MCF 10A (cell line): ENCODE measurements at regions of chr11 and their contacts with region 1.

Region 1: GRCh38 chr11:36478700-36479329 is 31.3 kb downstream of the TRAF6 start:
- DNase-seq: peak; percentile 59
- H3K4me3 Mint-ChIP-seq: no peak overlapping the region
- H3K27ac Mint-ChIP-seq: no peak overlapping the region
- H3K4me1 Mint-ChIP-seq: no peaks in the 10 kb centered on the region
- H3K27me3 Mint-ChIP-seq: no peaks in the 10 kb centered on the region
- CTCF ChIP-seq: peak; percentile 72

Region 2: GRCh38 chr11:36265793-36266628 is 212.8 kb before region 1 on chr11:
- CTCF ChIA-PET with region 1: interaction called, 16 read pairs
- POLR2A ChIA-PET with region 1: no interaction called
- intact Hi-C with region 1: no loop called
- DNase-seq: peak; percentile 68
- H3K4me3 Mint-ChIP-seq: no peak overlapping the region
- H3K27ac Mint-ChIP-seq: no peak overlapping the region
- H3K4me1 Mint-ChIP-seq: no peaks in the 10 kb centered on the region
- H3K27me3 Mint-ChIP-seq: no peaks in the 10 kb centered on the region
- CTCF ChIP-seq: peak; percentile 92

Region 3: GRCh38 chr11:36306888-36307287 is 171.9 kb before region 1 on chr11:
- CTCF ChIA-PET with region 1: interaction called, 5 read pairs
- POLR2A ChIA-PET with region 1: no interaction called
- intact Hi-C with region 1: loop called (anchors 1 kb)
- DNase-seq: peak; percentile 65
- H3K4me3 Mint-ChIP-seq: no peak overlapping the region
- H3K27ac Mint-ChIP-seq: no peak overlapping the region
- H3K4me1 Mint-ChIP-seq: peaks cover 39% of the 10 kb centered on the region
- H3K27me3 Mint-ChIP-seq: no peaks in the 10 kb centered on the region
- CTCF ChIP-seq: peak; percentile 45

Region 4: GRCh38 chr11:36450110-36450572 is 28.7 kb before region 1 on chr11:
- CTCF ChIA-PET with region 1: interaction called, 12 read pairs
- POLR2A ChIA-PET with region 1: no interaction called
- intact Hi-C with region 1: no loop called
- DNase-seq: no peak
- H3K4me3 Mint-ChIP-seq: no peak overlapping the region
- H3K27ac Mint-ChIP-seq: peak overlapping the region; percentile 35
- H3K4me1 Mint-ChIP-seq: peaks cover 27% of the 10 kb centered on the region
- H3K27me3 Mint-ChIP-seq: no peaks in the 10 kb centered on the region
- CTCF ChIP-seq: no peak

Region 5: GRCh38 chr11:36500315-36500721 is 21.5 kb after region 1 on chr11:
- CTCF ChIA-PET with region 1: interaction called, 12 read pairs
- POLR2A ChIA-PET with region 1: no interaction called
- intact Hi-C with region 1: no loop called
- DNase-seq: peak; percentile 69
- H3K4me3 Mint-ChIP-seq: no peak overlapping the region
- H3K27ac Mint-ChIP-seq: peak overlapping the region; percentile 81
- H3K4me1 Mint-ChIP-seq: peaks cover 18% of the 10 kb centered on the region
- H3K27me3 Mint-ChIP-seq: no peaks in the 10 kb centered on the region
- CTCF ChIP-seq: no peak